SK-N-SH (cell line): ENCODE measurements at regions of chr20 and their contacts with region 1.

Region 1: GRCh38 chr20:46307139-46307998 is 929 bp downstream of the CDH22 start:
- DNase-seq: peak; percentile 89
- H3K4me3 ChIP-seq: peak overlapping the region in 1 of 2 experiments; percentile 49; a peak in 3 of 4 replicates
- H3K27ac ChIP-seq: no peak overlapping the region
- H3K4me1 ChIP-seq: no peaks in the 10 kb centered on the region; a peak in 1 of 4 replicates
- H3K27me3 ChIP-seq: peaks cover 61% of the 10 kb centered on the region
- CTCF ChIP-seq: peak; percentile 69
- EP300 ChIP-seq: no peak
- RAD21 ChIP-seq: peak; percentile 75

Region 2: DNA sequence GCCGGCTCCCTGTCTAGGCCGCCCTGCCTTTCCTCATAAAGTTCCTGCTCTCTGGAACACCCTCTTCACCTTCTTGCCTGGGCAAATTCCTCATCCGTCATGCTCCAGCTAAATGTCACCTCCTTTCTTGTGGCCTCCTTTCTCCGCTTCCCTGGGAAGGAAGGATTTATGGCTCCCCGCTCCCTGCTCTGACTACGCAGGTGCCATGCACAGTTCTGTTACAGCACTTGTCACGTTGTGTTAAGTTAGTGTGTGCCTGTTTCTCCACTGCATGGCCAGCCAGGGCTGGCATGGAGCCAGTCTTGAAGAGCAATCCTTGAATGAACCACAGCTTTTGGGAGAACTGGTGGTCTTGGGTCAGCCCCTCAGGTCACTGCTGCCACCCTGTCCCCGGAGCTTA is 127.5 kb before region 1 on chr20:
- CTCF ChIA-PET with region 1: interaction called, 37 read pairs
- POLR2A ChIA-PET with region 1: no interaction called
- DNase-seq: no peak
- H3K4me3 ChIP-seq: no peak overlapping the region
- H3K27ac ChIP-seq: no peak overlapping the region
- H3K4me1 ChIP-seq: peaks cover 0 to 14% of the 10 kb centered on the region in 2 experiments; a peak in 1 of 4 replicates
- H3K27me3 ChIP-seq: no peaks in the 10 kb centered on the region; the same call in 1 of the 2 replicates
- CTCF ChIP-seq: no peak
- EP300 ChIP-seq: no peak
- RAD21 ChIP-seq: no peak

Region 3: GRCh38 chr20:46293084-46293483 is 14.3 kb before region 1 on chr20:
- CTCF ChIA-PET with region 1: interaction called, 39 read pairs
- POLR2A ChIA-PET with region 1: no interaction called
- DNase-seq: no peak
- H3K4me3 ChIP-seq: no peak overlapping the region
- H3K27ac ChIP-seq: no peak overlapping the region
- H3K4me1 ChIP-seq: no peaks in the 10 kb centered on the region
- H3K27me3 ChIP-seq: no peaks in the 10 kb centered on the region; the same call in 1 of the 2 replicates
- CTCF ChIP-seq: no peak
- EP300 ChIP-seq: no peak
- RAD21 ChIP-seq: no peak

Region 4: DNA sequence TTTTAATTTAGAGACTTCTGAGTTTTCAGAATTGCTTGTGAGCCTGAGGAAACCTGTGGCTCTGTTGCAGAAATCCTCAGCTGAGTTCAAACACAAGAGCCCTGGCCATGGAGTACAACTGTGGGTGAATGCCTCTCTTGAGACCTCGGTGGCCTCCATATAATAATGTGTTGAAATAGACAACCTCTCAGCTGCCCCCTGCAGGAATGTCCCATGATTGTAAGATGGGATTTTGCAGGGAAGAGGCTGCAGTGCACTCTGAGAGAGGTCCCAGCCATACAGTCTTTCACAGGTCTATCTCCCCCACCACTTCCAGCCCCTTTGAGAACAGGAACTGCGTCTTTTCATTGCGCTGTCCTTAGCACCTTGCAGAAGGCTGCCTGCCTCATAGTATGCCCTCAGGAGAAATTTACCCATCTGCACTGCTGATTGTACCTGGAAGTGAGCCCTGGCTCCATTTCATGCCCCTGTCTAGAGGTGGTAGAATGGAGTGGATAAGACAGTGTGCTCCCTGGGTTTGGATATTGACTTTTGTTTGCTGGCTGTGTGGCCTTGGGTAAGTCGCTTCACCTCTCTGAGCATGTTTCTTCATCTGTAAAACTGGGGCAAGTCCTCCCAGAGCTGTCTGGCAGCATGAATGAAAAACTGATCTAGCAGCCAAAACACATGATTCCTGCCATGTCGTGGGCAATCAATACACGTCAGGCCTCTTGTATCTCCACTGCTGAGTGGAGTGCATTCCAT is 17.8 kb after region 1 on chr20:
- CTCF ChIA-PET with region 1: interaction called, 51 read pairs
- POLR2A ChIA-PET with region 1: no interaction called
- DNase-seq: peak; percentile 71
- H3K4me3 ChIP-seq: no peak overlapping the region
- H3K27ac ChIP-seq: no peak overlapping the region
- H3K4me1 ChIP-seq: peaks cover 0 to 20% of the 10 kb centered on the region in 2 experiments; a peak in 1 of 4 replicates
- H3K27me3 ChIP-seq: no peaks in the 10 kb centered on the region
- CTCF ChIP-seq: peak; percentile 52
- EP300 ChIP-seq: no peak
- RAD21 ChIP-seq: peak; percentile 60

Region 5: DNA sequence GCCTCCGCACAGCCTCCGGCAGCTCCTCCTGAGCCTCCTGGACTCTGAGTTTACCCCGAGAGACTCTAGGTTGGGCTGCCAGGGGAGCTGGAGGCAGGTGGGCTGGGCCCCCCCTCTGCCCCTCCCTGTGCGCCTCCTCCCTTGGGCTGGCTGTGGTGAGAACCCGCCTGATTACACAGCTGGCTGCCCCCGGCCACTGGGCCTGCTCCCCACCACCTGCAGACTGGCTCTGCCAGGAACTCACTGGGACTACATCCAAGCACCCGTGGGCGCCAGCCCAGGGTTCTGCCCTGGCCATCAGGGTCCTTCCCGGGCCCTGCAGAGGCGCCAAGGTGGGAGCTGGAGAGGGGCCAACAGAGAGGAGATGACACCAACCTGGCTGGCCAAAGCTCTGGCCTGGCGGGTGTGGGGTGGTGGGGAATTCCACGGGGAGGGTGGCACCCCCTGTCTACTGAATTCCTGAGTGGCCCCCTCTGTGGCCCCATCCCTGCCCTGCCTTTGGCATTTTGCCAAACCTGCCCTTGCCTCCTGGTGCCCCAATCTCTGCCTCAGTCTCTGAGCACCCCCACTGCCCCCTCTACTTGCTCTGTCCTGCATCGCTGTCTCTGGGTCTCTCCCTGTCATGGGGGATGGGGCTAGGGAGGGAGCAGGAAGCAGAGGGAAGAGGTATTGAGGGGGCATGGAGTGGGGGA is 22.8 kb after region 1 on chr20:
- CTCF ChIA-PET with region 1: interaction called, 51 read pairs
- POLR2A ChIA-PET with region 1: no interaction called
- DNase-seq: peak; percentile 55
- H3K4me3 ChIP-seq: no peak overlapping the region
- H3K27ac ChIP-seq: peak overlapping the region in 1 of 2 experiments; percentile 43; a peak in 2 of 4 replicates
- H3K4me1 ChIP-seq: peaks cover 0 to 67% of the 10 kb centered on the region in 2 experiments; a peak in 2 of 4 replicates
- H3K27me3 ChIP-seq: 0 out of 2 replicates have a peak, but pooled peaks cover 8% of the 10 kb centered on the region
- CTCF ChIP-seq: no peak
- EP300 ChIP-seq: peak in 1 of 2 experiments; percentile 36; a peak in 1 of 4 replicates
- RAD21 ChIP-seq: no peak

Region 6: DNA sequence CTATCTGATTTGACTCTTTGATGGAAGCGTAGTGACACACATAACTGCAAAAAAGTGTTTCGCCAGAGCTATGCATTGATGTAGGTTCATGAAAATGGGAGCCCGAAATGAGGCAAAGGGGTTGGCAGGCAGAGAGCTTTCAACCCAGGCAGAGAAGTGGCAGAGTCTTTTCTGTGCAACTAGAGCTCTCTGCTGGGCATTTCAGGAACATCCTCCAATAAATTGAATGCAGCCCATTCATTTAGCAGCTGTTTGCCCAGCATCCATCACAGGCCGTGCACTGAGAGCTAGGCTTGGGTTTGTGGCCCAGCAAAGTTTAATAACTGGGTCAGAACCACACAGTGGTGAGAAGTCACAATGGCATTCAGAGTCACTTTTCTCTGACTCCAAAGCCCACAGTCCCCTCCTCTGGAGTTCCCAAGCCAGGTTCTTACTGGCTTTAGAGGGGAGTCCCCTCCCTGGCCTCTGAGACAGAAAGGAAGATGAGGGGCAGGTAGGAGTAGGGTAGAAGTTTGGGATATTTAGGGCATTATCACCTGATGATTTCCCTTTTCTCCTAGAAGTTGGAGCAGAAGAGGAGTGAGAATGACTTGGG is 130.9 kb after region 1 on chr20:
- CTCF ChIA-PET with region 1: interaction called, 13 read pairs
- POLR2A ChIA-PET with region 1: no interaction called
- DNase-seq: peak; percentile 65
- H3K4me3 ChIP-seq: no peak overlapping the region
- H3K27ac ChIP-seq: no peak overlapping the region
- H3K4me1 ChIP-seq: peaks cover 0 to 10% of the 10 kb centered on the region in 2 experiments; a peak in 1 of 4 replicates
- H3K27me3 ChIP-seq: no peaks in the 10 kb centered on the region
- CTCF ChIP-seq: peak; percentile 45
- EP300 ChIP-seq: no peak
- RAD21 ChIP-seq: peak; percentile 84